Right ventricle myocardium inferior (tissue), 1 donor: ENCODE measurements at regions of chr12 and their contacts with region 1.

Region 1: GRCh38 chr12:109255377-109255776 is 53.7 kb downstream of the FOXN4 start:
- DNase-seq: no peak
- ATAC-seq: no peak

Region 2: DNA sequence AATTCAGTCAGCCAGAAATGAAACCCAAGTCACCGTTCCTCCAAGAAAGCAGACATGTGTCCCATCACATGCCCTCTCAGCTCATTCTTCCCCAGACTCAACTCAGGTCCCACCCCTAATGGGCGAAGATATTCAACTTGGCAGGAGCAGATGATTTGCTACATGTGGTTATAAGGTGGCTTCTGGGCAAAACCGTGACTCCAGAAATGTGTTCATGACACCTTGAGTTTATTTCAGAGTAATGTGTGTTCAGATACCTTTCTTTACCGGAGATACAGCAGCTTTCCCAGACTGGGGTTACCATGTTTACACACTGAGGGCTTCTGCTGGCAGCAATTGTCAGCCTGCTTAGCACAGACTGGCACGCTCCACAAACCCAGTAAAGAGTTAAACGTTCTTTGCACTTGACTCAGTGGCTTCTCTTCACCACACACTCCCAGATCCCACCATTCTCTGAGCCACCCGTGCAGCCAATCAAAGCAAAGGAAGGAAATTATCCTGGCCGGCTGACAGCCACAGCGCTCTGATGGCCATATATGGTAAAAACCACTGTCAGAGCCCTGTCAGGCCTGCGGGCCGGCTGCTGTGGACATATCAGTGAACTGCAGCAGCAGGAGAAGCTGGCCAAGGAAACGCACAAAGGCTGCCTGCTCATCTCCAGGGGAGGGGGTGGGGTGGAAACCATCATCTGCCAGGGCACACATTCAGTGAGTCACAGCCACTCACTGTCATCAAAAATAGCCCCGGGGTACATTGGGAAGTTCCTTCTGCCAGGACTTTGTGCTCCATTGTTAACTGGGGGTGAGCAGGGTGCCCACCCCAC is 564.0 kb before region 1 on chr12:
- intact Hi-C with region 1: no loop called
- DNase-seq: peak; percentile 98
- ATAC-seq: peak; percentile 95

Region 3: GRCh38 chr12:109047081-109047805 is 208.1 kb before region 1 on chr12:
- intact Hi-C with region 1: no loop called
- DNase-seq: no peak
- ATAC-seq: no peak

Region 4: GRCh38 chr12:109202770-109203169 is 52.6 kb before region 1 on chr12:
- intact Hi-C with region 1: loop called (anchors 10 kb)
- DNase-seq: no peak
- ATAC-seq: no peak

Region 5: DNA sequence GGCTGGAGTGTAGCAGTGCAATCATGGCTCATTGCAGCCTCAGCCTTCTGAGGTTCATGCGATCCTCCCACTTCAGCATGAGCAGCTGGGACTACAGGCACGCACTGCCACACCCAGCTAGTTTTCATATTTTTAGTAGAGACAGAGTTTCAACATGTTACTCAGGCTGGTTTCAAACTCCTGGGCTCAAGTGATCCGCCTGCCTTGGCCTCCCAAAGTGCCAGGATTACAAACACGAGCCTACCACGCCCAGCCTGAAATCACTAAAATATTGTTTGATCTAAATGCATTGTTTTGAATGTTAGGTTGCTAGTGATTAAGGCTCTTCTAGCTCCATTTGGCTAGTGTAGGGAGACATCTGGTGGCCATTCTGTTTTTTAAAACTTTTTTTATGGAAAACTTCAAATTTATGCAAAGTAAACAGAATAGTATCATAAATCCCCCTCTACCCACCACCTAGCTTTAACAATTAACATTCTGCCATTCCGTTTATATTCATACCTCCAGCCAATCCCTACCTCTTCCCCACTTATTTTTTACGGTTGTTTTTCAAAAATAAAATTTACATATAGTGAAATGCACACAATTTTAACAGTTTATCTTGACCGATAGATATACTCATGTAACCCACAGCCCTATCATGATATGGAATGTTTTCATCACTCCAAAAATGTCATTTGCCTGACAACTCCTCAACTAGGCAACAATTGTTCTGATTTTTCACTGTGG is 130.1 kb after region 1 on chr12:
- intact Hi-C with region 1: loop called (anchors 1 kb)
- DNase-seq: no peak
- ATAC-seq: peak; percentile 69